GM12878 (cell line): ENCODE measurements at regions of chr2 and their contacts with region 1.

Region 1: GRCh38 chr2:44616667-44617155 is 255.0 kb downstream of the CAMKMT start:
- DNase-seq: peak; percentile 65
- ATAC-seq: peak; percentile 93
- H3K4me3 ChIP-seq: peak overlapping the region; percentile 42
- H3K27ac ChIP-seq: peak overlapping the region; percentile 71
- H3K4me1 ChIP-seq: peaks cover 26% of the 10 kb centered on the region
- H3K27me3 ChIP-seq: no peaks in the 10 kb centered on the region
- CTCF ChIP-seq: no peak
- EP300 ChIP-seq: peak; percentile 37 to 72; a peak in 2 of 4 replicates
- POLR2A ChIP-seq: no peak
- RAD21 ChIP-seq: no peak

Region 2: DNA sequence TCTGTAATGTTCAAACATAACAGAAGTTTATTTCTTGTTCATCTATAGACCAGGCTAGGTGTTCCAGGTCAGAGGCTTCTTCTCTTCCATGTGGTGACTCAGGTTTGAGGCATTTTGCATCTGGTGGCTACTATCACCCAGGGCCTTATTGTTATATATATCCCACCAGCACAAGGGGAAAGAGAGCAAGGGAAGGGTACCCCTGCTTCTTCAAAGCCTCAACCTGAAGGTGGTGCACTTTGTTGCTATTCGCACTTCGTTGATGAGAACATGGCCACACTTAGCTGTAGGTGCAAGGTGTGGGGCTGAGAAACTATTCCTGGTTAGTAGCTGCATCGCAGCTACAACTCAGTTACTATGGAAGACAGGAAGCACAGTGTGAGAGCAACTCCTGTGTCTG is 368.8 kb before region 1 on chr2:
- CTCF ChIA-PET with region 1: no interaction called
- POLR2A ChIA-PET with region 1: no interaction called
- RAD21 ChIA-PET with region 1: no interaction called
- SMC1A ChIA-PET with region 1: no interaction called
- in situ Hi-C with region 1: no loop called
- intact Hi-C with region 1: no loop called
- DNase-seq: no peak
- ATAC-seq: no peak
- H3K4me3 ChIP-seq: no peak overlapping the region
- H3K27ac ChIP-seq: no peak overlapping the region
- H3K4me1 ChIP-seq: peaks cover 9% of the 10 kb centered on the region
- H3K27me3 ChIP-seq: no peaks in the 10 kb centered on the region
- CTCF ChIP-seq: no peak
- EP300 ChIP-seq: no peak
- POLR2A ChIP-seq: no peak
- RAD21 ChIP-seq: no peak

Region 3: DNA sequence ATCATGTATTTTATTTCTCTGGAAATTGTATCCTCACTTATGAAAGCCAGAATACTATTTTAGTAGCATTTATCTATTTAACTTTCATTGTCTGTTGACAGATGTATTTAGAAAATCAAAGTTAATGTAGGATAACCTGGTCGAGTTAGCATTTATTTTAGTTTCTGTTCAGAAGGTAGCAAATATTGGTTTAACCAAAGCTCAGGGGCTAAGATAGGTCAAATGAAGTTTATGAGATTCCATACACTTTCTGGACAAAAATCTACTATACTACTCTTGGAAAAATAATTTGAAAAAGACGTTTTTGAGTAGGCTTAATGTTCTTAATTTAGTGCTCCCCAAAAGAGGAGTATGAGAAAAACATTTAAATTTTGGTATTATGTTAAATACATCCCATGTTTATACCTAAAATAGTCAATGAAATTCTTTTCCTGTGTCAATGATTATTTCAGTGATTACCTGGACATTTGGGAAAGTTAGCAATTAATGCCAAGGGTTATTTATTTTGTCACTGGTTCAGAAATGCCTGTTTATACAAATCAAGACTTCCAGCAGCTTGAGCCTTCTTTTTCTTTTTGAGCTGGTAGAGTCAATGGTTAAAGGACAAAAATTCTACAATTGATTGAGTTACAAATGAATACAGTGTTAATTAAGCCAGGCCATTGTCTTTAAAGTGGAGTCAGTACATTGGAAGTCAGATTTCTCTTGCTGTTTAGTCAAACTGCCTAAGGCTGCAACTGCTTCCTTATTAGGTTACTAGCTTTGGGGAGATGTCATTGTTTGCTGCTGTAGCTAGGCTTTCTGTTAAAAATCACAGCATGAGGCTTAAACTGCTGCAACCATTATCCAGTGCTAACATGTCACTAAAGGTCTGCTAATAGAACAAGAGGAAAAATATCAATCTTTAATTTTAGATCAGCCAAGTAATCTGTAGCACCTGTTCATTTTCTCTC is 72.7 kb before region 1 on chr2:
- CTCF ChIA-PET with region 1: interaction called, 3 read pairs
- POLR2A ChIA-PET with region 1: no interaction called
- RAD21 ChIA-PET with region 1: interaction called, 4 read pairs
- SMC1A ChIA-PET with region 1: interaction called, 19 read pairs
- in situ Hi-C with region 1: no loop called
- intact Hi-C with region 1: no loop called
- DNase-seq: no peak
- ATAC-seq: no peak
- H3K4me3 ChIP-seq: no peak overlapping the region
- H3K27ac ChIP-seq: no peak overlapping the region
- H3K4me1 ChIP-seq: peaks cover 5% of the 10 kb centered on the region
- H3K27me3 ChIP-seq: no peaks in the 10 kb centered on the region
- CTCF ChIP-seq: no peak
- EP300 ChIP-seq: no peak
- POLR2A ChIP-seq: no peak
- RAD21 ChIP-seq: no peak

Region 4: GRCh38 chr2:44602446-44602845 is 14.3 kb before region 1 on chr2:
- CTCF ChIA-PET with region 1: interaction called, 10 read pairs
- POLR2A ChIA-PET with region 1: interaction called, 29 read pairs
- RAD21 ChIA-PET with region 1: interaction called, 58 read pairs
- SMC1A ChIA-PET with region 1: interaction called, 138 read pairs
- in situ Hi-C with region 1: no loop called
- intact Hi-C with region 1: no loop called
- DNase-seq: no peak
- ATAC-seq: no peak
- H3K4me3 ChIP-seq: no peak overlapping the region
- H3K27ac ChIP-seq: no peak overlapping the region
- H3K4me1 ChIP-seq: peaks cover 3% of the 10 kb centered on the region; the same call in 1 of the 2 replicates
- H3K27me3 ChIP-seq: no peaks in the 10 kb centered on the region
- CTCF ChIP-seq: no peak
- EP300 ChIP-seq: no peak
- POLR2A ChIP-seq: no peak
- RAD21 ChIP-seq: no peak

Region 5: DNA sequence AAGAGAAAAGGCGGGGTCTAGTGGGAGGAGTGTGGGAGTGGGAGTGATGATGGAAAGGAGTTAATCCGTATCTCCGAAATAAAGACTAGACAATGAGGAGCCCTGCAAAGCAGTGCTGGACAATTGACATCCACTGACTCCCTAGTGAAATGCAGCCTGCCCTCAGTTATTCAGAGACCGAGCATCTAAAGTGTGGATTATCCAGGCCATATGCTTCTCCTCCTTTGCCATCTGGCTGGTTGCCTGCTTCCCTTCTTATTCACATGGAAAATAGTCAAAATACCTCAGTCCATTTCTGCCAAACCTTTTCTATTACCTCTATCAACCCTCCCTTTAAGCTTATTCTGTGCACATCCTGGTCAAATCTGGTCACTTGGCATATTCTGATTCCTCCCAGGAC is 36.0 kb after region 1 on chr2:
- CTCF ChIA-PET with region 1: interaction called, 7 read pairs
- POLR2A ChIA-PET with region 1: interaction called, 4 read pairs
- RAD21 ChIA-PET with region 1: interaction called, 4 read pairs
- SMC1A ChIA-PET with region 1: interaction called, 13 read pairs
- in situ Hi-C with region 1: no loop called
- intact Hi-C with region 1: no loop called
- DNase-seq: no peak
- ATAC-seq: no peak
- H3K4me3 ChIP-seq: no peak overlapping the region
- H3K27ac ChIP-seq: no peak overlapping the region
- H3K4me1 ChIP-seq: peaks cover 9% of the 10 kb centered on the region
- H3K27me3 ChIP-seq: no peaks in the 10 kb centered on the region
- CTCF ChIP-seq: no peak
- EP300 ChIP-seq: no peak
- POLR2A ChIP-seq: no peak
- RAD21 ChIP-seq: no peak

Region 6: DNA sequence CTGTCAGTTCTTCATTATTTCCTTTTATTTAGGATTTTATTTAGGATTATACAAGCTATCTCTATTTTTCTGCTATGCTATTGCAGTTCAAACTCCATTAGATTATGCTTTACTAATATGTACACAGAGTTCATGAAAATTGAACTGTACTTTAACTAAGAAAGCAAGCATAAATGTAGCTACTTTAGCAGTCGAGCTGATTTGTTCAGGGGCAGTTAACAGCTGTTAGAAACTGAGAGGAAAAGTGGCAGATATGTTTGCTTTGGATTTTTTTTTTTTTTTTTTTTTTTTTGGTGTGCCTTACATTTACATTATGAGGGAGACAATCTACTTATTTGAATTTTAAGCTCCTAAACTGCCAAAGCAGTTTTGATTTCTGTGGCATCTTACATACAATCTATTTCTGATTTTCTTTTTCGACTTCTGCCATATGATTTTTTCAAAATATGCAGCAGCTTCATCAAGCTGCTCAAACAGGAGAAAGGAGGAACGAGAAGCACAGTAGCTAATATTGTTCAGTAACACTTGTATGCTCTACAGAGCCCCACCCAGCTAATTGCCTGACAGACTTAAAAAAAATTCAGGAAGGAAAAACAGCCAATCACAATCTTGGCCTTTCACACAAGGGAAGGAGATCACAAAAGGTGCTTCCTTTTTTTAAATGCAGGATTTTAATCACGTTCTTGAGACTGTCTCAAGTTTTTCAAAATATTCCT is 91.4 kb after region 1 on chr2:
- CTCF ChIA-PET with region 1: interaction called, 3 read pairs
- POLR2A ChIA-PET with region 1: interaction called, 6 read pairs
- RAD21 ChIA-PET with region 1: interaction called, 16 read pairs
- SMC1A ChIA-PET with region 1: interaction called, 13 read pairs
- in situ Hi-C with region 1: no loop called
- intact Hi-C with region 1: no loop called
- DNase-seq: peak; percentile 25
- ATAC-seq: peak; percentile 86
- H3K4me3 ChIP-seq: no peak overlapping the region; the same call in 1 of the 2 replicates
- H3K27ac ChIP-seq: peak overlapping the region; percentile 23; the same call in 1 of the 2 replicates
- H3K4me1 ChIP-seq: peaks cover 8% of the 10 kb centered on the region
- H3K27me3 ChIP-seq: no peaks in the 10 kb centered on the region
- CTCF ChIP-seq: no peak
- EP300 ChIP-seq: no peak
- POLR2A ChIP-seq: no peak
- RAD21 ChIP-seq: no peak

Region 7: GRCh38 chr2:44981136-44982108 is 364.7 kb after region 1 on chr2:
- CTCF ChIA-PET with region 1: no interaction called
- POLR2A ChIA-PET with region 1: no interaction called
- RAD21 ChIA-PET with region 1: no interaction called
- SMC1A ChIA-PET with region 1: no interaction called
- in situ Hi-C with region 1: no loop called
- intact Hi-C with region 1: no loop called
- DNase-seq: no peak
- ATAC-seq: peak; percentile 92
- H3K4me3 ChIP-seq: no peak overlapping the region
- H3K27ac ChIP-seq: no peak overlapping the region
- H3K4me1 ChIP-seq: peaks cover 4% of the 10 kb centered on the region
- H3K27me3 ChIP-seq: no peaks in the 10 kb centered on the region; a peak in 1 of 4 replicates
- CTCF ChIP-seq: peak; percentile 76 to 89 (median 77)
- EP300 ChIP-seq: no peak
- POLR2A ChIP-seq: no peak
- RAD21 ChIP-seq: peak; percentile 92

Region 8: DNA sequence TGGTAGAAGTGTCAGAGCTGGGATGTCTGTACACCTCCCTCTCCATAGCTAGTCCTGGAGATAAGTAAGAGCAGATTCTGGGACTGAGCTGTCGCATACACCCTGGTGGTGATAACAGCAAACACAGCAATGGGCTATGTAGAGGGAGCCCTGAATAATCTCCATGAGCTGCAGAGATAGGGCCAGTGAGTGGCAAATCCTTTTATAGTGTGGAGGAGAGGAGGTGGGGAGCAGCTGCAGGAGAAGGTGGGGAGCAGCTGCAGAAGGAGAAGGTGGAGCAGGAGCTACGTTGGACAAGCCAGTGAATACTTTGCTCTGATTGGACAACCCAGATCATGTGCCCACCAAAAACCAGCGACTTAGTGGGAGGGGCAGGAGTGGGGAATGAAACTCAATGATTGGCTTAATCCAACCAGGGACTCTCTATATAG is 1948.1 kb after region 1 on chr2:
- CTCF ChIA-PET with region 1: no interaction called
- POLR2A ChIA-PET with region 1: no interaction called
- RAD21 ChIA-PET with region 1: no interaction called
- SMC1A ChIA-PET with region 1: no interaction called
- in situ Hi-C with region 1: no loop called
- intact Hi-C with region 1: no loop called
- DNase-seq: no peak
- ATAC-seq: no peak
- H3K4me3 ChIP-seq: no peak overlapping the region
- H3K27ac ChIP-seq: no peak overlapping the region
- H3K4me1 ChIP-seq: peaks cover 68% of the 10 kb centered on the region
- H3K27me3 ChIP-seq: no peaks in the 10 kb centered on the region
- CTCF ChIP-seq: no peak
- EP300 ChIP-seq: no peak
- POLR2A ChIP-seq: no peak
- RAD21 ChIP-seq: no peak